CD4-positive, alpha-beta memory T cell (primary cell): ENCODE measurements at regions of chr4 and their contacts with region 1.

Region 1: GRCh38 chr4:6640292-6641163 is at the start of gene MRFAP1:
- DNase-seq: peak; percentile 94 to 97 (median 95)
- H3K4me3 ChIP-seq: peak within 1 kb of the TSS; percentile 90 to 92
- H3K4me3 Mint-ChIP-seq: peak within 1 kb of the TSS; percentile 96 to 100 (median 98)
- H3K27ac ChIP-seq: peak within 1 kb of the TSS; percentile 98
- H3K27ac Mint-ChIP-seq: peak within 1 kb of the TSS; percentile 98 to 100 (median 99)
- H3K4me1 ChIP-seq: peaks cover 31% of the 10 kb centered on the region
- H3K4me1 Mint-ChIP-seq: peaks cover 29 to 40% (median 34%) of the 10 kb centered on the region in 4 donors
- H3K27me3 ChIP-seq: no peaks in the 10 kb centered on the region
- H3K27me3 Mint-ChIP-seq: no peaks in the 10 kb centered on the region
- total RNA-seq, gene MRFAP1: 149 to 157 TPM

Region 2: GRCh38 chr4:6658597-6659075 is 18.1 kb after region 1 on chr4:
- CTCF ChIA-PET with region 1: interaction called, 6 read pairs
- POLR2A ChIA-PET with region 1: interaction called, 59 read pairs
- intact Hi-C with region 1: loop called (anchors 2 kb)
- DNase-seq: peak; percentile 59 to 74 (median 60)
- H3K4me3 ChIP-seq: peak overlapping the region in 1 of 2 donors; percentile 42
- H3K4me3 Mint-ChIP-seq: peak overlapping the region; percentile 67 to 79 (median 76)
- H3K27ac ChIP-seq: peak overlapping the region; percentile 37
- H3K27ac Mint-ChIP-seq: peak overlapping the region in 4 of 7 donors; percentile 53 to 83 (median 74)
- H3K4me1 ChIP-seq: peaks cover 13% of the 10 kb centered on the region
- H3K4me1 Mint-ChIP-seq: peaks cover 0 to 23% (median 9%) of the 10 kb centered on the region in 4 donors
- H3K27me3 ChIP-seq: no peaks in the 10 kb centered on the region
- H3K27me3 Mint-ChIP-seq: no peaks in the 10 kb centered on the region

Region 3: DNA sequence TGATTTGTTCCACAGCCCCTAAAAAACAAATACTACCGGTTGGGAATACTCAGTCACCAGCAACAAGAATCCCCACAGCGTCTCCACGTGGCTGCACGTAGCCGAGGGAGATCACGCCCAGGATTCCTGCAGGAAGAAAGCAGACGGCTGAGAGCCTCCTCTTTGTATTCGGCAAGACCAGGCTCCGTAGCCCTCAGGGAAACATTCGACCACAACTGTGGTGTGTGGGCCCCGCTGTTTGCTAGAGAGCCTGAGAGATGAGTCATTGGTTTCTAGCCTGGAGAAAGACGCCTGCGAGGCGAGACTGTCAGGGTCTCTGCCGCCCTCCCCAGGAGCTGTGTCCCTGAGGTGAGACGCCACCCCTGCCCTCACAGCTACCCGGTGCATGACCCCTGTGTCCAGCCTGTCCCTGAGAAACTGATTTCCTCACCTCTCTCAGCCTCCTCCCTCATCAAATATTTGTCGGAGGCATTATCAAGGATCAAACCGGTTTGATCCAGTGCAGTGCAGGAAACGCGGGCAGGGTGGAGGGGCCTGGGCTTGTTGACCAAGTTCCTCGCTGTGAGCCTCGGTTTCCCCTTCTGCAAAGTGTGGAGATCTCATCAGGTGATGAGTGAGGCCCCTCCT is 48.5 kb after region 1 on chr4:
- CTCF ChIA-PET with region 1: interaction called, 6 read pairs
- POLR2A ChIA-PET with region 1: interaction called, 113 read pairs
- intact Hi-C with region 1: no loop called
- DNase-seq: peak; percentile 60 to 92 (median 64)
- H3K4me3 ChIP-seq: peak overlapping the region; percentile 18 to 55
- H3K4me3 Mint-ChIP-seq: peak overlapping the region; percentile 87 to 97 (median 93)
- H3K27ac ChIP-seq: peak overlapping the region; percentile 62
- H3K27ac Mint-ChIP-seq: peak overlapping the region; percentile 89 to 99 (median 97)
- H3K4me1 ChIP-seq: peaks cover 73% of the 10 kb centered on the region
- H3K4me1 Mint-ChIP-seq: peaks cover 55 to 88% (median 72%) of the 10 kb centered on the region in 4 donors
- H3K27me3 ChIP-seq: no peaks in the 10 kb centered on the region
- H3K27me3 Mint-ChIP-seq: no peaks in the 10 kb centered on the region

Region 4: DNA sequence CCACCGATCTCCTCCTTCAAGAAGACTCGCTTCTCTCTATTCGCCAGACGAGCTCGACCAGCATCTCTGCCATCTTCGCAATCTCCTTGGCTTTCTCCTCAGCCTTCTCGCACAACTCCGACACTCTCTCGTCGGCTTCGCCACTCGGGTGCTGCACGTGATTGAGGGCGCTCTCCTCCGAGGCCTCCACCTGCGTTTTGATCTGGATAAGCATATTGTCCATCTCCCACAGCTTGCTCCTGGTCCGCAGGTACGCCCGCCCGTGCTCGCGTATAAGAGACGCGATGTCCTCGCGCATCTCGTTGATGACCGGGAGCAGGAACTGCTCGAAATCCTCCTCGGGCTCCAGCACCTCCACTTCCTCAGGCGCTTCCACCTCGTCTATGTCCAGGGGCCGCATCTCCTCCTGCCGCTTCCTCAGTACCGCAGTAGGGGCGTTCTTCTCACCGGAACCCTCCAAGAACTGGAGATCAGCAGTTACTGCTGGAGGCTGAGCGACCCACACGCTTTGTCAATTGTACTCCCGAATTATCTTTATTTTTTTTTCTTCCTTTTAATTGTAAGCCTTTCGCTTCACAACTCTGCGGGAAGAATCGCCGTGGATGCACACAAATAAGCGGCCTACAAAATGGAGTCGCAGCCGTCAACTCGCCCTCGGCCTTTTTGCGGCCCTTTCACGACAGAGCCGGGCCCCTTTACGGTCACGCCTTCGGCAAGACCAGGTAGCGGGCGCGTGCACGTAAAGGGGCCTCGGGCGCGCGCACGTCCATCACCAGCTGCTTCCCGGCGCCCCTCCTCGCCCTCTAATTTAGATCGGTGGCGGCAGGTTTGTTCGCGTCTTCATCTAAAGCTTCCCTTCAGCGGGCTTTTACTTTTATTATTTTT is 68.9 kb after region 1 on chr4 and contains the start of gene MRFAP1L1:
- CTCF ChIA-PET with region 1: no interaction called
- POLR2A ChIA-PET with region 1: interaction called, 65 read pairs
- intact Hi-C with region 1: loop called (anchors 1 kb)
- DNase-seq: peak; percentile 96 to 98 (median 97)
- H3K4me3 ChIP-seq: peak within 1 kb of the TSS; percentile 74 to 84
- H3K4me3 Mint-ChIP-seq: peak within 1 kb of the TSS; percentile 97 to 100 (median 99)
- H3K27ac ChIP-seq: peak within 1 kb of the TSS; percentile 95
- H3K27ac Mint-ChIP-seq: peak within 1 kb of the TSS; percentile 99 to 100 (median 99)
- H3K4me1 ChIP-seq: peaks cover 51% of the 10 kb centered on the region
- H3K4me1 Mint-ChIP-seq: peaks cover 44 to 71% (median 55%) of the 10 kb centered on the region in 4 donors
- H3K27me3 ChIP-seq: no peaks in the 10 kb centered on the region
- H3K27me3 Mint-ChIP-seq: no peaks in the 10 kb centered on the region
- total RNA-seq, gene MRFAP1L1: 127 to 134 TPM

Region 5: GRCh38 chr4:6909073-6909965 is 268.8 kb after region 1 on chr4 and contains the start of gene TBC1D14:
- CTCF ChIA-PET with region 1: no interaction called
- POLR2A ChIA-PET with region 1: interaction called, 14 read pairs
- intact Hi-C with region 1: loop called (anchors 1 kb)
- DNase-seq: peak; percentile 88 to 92 (median 90)
- H3K4me3 ChIP-seq: peak within 1 kb of the TSS; percentile 77 to 78
- H3K4me3 Mint-ChIP-seq: peak within 1 kb of the TSS; percentile 90 to 95 (median 91)
- H3K27ac ChIP-seq: peak within 1 kb of the TSS; percentile 81
- H3K27ac Mint-ChIP-seq: peak within 1 kb of the TSS; percentile 88 to 96 (median 91)
- H3K4me1 ChIP-seq: peaks cover 63% of the 10 kb centered on the region
- H3K4me1 Mint-ChIP-seq: peaks cover 30 to 67% (median 52%) of the 10 kb centered on the region in 4 donors
- H3K27me3 ChIP-seq: no peaks in the 10 kb centered on the region
- H3K27me3 Mint-ChIP-seq: no peaks in the 10 kb centered on the region
- total RNA-seq, gene TBC1D14: 73.7 to 80.7 TPM

Region 6: DNA sequence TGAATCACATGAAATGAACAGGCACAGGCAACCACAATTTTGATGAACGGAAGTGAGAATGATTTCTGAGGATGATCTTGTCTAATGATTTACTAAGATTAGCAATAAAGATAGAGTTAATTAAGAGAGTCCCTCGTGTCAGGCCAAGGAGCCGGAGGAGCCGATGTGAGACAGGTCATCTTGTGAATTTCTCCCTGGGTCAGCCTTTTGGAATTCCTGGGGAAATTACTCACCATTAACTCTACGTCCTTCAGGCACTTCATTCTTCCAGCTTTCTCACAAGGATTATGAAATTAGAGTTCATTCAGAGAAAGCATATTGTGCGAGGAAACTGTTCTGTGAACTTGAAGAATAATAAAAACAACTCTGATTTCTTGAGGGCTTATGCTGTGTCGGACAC is 707.5 kb after region 1 on chr4:
- CTCF ChIA-PET with region 1: no interaction called
- POLR2A ChIA-PET with region 1: no interaction called
- intact Hi-C with region 1: no loop called
- DNase-seq: no peak
- H3K4me3 ChIP-seq: no peak overlapping the region
- H3K4me3 Mint-ChIP-seq: no peak overlapping the region
- H3K27ac ChIP-seq: no peak overlapping the region
- H3K27ac Mint-ChIP-seq: no peak overlapping the region
- H3K4me1 ChIP-seq: no peaks in the 10 kb centered on the region
- H3K4me1 Mint-ChIP-seq: no peaks in the 10 kb centered on the region
- H3K27me3 ChIP-seq: no peaks in the 10 kb centered on the region
- H3K27me3 Mint-ChIP-seq: peaks cover 5% of the 10 kb centered on the region in 2 donors